ENCODE measurements at regions of chr20 and their contacts with region 1.

Region 1: GRCh38 chr20:19828232-19828631 is 70.2 kb downstream of the RIN2 start:
- DNase-seq: no peak
- H3K4me3 ChIP-seq: no peak overlapping the region
- CTCF ChIP-seq: peak; percentile 31

Region 2: GRCh38 chr20:19815553-19815991 is 12.7 kb before region 1 on chr20:
- CTCF ChIA-PET with region 1: interaction called, 39 read pairs
- POLR2A ChIA-PET with region 1: no interaction called
- DNase-seq: peak; percentile 96
- H3K4me3 ChIP-seq: no peak overlapping the region
- CTCF ChIP-seq: no peak

Measured in AG04449 (cell line).